ENCODE measurements at regions of chr2 and their contacts with region 1.

Region 1: DNA sequence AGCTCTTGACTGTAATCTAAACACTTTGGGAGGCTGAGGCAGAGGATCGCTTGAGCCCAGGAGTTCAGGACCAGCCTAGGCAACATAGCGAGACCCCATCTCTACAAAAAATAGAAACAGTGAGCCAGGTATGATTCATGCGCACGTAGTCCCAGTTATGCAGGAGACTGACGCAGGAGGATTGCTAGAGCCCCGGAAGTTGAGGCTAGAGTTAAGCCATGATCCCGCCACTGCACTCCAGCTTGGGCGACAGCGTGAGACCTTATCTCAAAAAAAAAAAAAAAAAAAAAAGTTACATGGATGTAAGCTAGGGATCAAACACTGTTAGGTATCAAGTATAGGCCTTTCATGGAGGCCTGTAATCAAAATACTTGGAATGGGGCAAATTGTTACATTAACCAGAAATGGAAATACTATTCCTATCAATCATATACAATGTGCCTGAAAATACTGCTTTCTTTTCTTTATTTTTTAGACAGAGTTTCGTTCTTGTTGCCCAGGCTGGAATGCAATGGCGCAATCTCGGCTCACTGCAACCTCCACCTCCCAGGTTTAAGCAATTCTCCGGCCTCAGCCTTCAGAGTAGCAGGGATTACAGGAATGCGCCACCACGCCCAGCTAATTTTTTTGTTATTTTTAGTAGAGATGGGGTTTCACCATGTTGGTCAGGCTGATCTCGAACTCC is 27.3 kb downstream of the XPO1 start:
- H3K4me3 ChIP-seq: no peak overlapping the region
- H3K27ac ChIP-seq: no peak overlapping the region
- H3K4me1 ChIP-seq: no peaks in the 10 kb centered on the region
- CTCF ChIP-seq: no peak

Region 2: GRCh38 chr2:60934165-60934722 is 576.6 kb before region 1 on chr2:
- CTCF ChIA-PET with region 1: no interaction called
- POLR2A ChIA-PET with region 1: no interaction called
- H3K4me3 ChIP-seq: no peak overlapping the region
- H3K27ac ChIP-seq: no peak overlapping the region
- H3K4me1 ChIP-seq: no peaks in the 10 kb centered on the region
- CTCF ChIP-seq: no peak

Region 3: GRCh38 chr2:61478086-61478485 is 32.7 kb before region 1 on chr2:
- CTCF ChIA-PET with region 1: no interaction called
- POLR2A ChIA-PET with region 1: interaction called, 10 read pairs
- H3K4me3 ChIP-seq: no peak overlapping the region
- H3K27ac ChIP-seq: no peak overlapping the region
- H3K4me1 ChIP-seq: no peaks in the 10 kb centered on the region
- CTCF ChIP-seq: no peak

Region 4: GRCh38 chr2:61785583-61785982 is 274.8 kb after region 1 on chr2:
- CTCF ChIA-PET with region 1: no interaction called
- POLR2A ChIA-PET with region 1: no interaction called
- H3K4me3 ChIP-seq: no peak overlapping the region
- H3K27ac ChIP-seq: no peak overlapping the region
- H3K4me1 ChIP-seq: no peaks in the 10 kb centered on the region
- CTCF ChIP-seq: no peak